ENCODE measurements at regions of chr22 and their contacts with region 1.

Region 1: GRCh38 chr22:25419237-25420113 is 145.0 kb upstream of the GRK3 start:
- DNase-seq: no peak
- ATAC-seq: peak; percentile 53
- H3K4me3 Mint-ChIP-seq: peak overlapping the region; percentile 73
- H3K27ac Mint-ChIP-seq: peak overlapping the region; percentile 2
- H3K4me1 Mint-ChIP-seq: peaks cover 38% of the 10 kb centered on the region
- H3K27me3 Mint-ChIP-seq: peaks cover 36% of the 10 kb centered on the region
- CTCF ChIP-seq: no peak

Region 2: GRCh38 chr22:25404928-25405816 is 14.3 kb before region 1 on chr22:
- CTCF ChIA-PET with region 1: no interaction called
- POLR2A ChIA-PET with region 1: interaction called, 13 read pairs
- intact Hi-C with region 1: loop called (anchors 2 kb)
- DNase-seq: peak; percentile 73
- ATAC-seq: peak; percentile 87
- H3K4me3 Mint-ChIP-seq: peak overlapping the region; percentile 73
- H3K27ac Mint-ChIP-seq: no peak overlapping the region
- H3K4me1 Mint-ChIP-seq: peaks cover 43% of the 10 kb centered on the region
- H3K27me3 Mint-ChIP-seq: no peaks in the 10 kb centered on the region
- CTCF ChIP-seq: no peak

Region 3: GRCh38 chr22:25666308-25666707 is 246.8 kb after region 1 on chr22:
- CTCF ChIA-PET with region 1: no interaction called
- POLR2A ChIA-PET with region 1: no interaction called
- intact Hi-C with region 1: no loop called
- DNase-seq: no peak
- ATAC-seq: no peak
- H3K4me3 Mint-ChIP-seq: no peak overlapping the region
- H3K27ac Mint-ChIP-seq: no peak overlapping the region
- H3K4me1 Mint-ChIP-seq: peaks cover 15% of the 10 kb centered on the region
- H3K27me3 Mint-ChIP-seq: no peaks in the 10 kb centered on the region
- CTCF ChIP-seq: no peak